B cell (primary cell): ENCODE measurements at regions of chr1 and their contacts with region 1.

Region 1: DNA sequence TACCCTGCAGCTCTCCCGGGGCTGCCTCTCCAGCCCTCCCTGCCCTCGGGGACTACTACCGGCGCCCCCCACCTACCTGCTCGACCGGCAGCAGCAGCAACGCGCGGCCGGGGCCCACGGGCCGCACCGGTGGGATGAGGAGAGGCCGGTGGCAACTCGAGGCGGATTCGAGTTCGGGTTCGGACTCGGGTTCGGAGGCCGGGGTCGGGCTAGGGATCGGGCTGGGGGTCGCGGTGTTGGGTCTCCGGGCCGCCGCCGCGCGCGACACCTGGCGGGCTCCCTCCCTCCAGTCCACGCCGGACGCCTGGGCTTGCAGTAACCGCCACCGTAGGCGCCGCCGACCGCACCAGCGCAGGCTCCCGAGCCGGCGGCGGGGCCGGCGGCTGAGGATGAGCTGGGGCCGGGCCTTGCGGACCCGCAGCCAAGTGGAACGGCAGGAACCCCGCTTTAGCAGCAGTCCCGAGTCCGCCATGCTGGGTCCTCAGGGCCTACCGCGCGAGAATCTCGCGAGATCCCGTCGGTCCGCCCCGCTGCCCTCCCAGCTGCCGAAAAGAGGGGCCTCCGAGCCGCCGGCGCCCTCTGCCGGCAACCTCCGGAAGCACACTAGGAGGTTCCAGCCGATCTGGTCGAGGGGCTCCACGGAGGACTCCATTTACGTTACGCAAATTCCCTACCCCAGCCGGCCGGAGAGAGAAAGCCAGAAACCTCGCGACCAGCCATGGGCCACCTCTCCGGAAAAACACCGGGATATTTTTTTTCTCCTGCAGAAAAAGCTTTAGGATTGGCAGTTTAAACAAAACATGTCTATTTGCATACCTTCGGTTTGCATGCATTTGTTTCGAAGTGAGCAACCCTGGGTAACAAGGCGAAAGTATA is at the start of gene NOL9:
- DNase-seq: peak; percentile 97
- ATAC-seq: peak; percentile 96
- H3K4me3 ChIP-seq: peak within 1 kb of the TSS; percentile 72 to 93 (median 84)
- H3K4me3 Mint-ChIP-seq: peak within 1 kb of the TSS; percentile 87
- H3K27ac ChIP-seq: peak within 1 kb of the TSS; percentile 14 to 86
- H3K27ac Mint-ChIP-seq: peak within 1 kb of the TSS; percentile 86
- H3K4me1 ChIP-seq: peaks cover 17 to 23% of the 10 kb centered on the region in 2 donors
- H3K4me1 Mint-ChIP-seq: peaks cover 20% of the 10 kb centered on the region
- H3K27me3 ChIP-seq: no peaks in the 10 kb centered on the region
- H3K27me3 Mint-ChIP-seq: no peaks in the 10 kb centered on the region
- CTCF ChIP-seq: peak; percentile 94
- total RNA-seq, gene NOL9: 49.5 and 56.7 TPM in 2 replicates

Region 2: GRCh38 chr1:6260961-6261614 is 293.2 kb before region 1 on chr1 and contains the start of gene GPR153:
- CTCF ChIA-PET with region 1: no interaction called
- POLR2A ChIA-PET with region 1: no interaction called
- intact Hi-C with region 1: no loop called
- DNase-seq: peak; percentile 47
- ATAC-seq: peak; percentile 55
- H3K4me3 ChIP-seq: peak within 1 kb of the TSS in 4 of 5 experiments; percentile 31 to 62 (median 58)
- H3K4me3 Mint-ChIP-seq: peak within 1 kb of the TSS; percentile 74
- H3K27ac ChIP-seq: no peak within 1 kb of the TSS
- H3K27ac Mint-ChIP-seq: no peak within 1 kb of the TSS
- H3K4me1 ChIP-seq: peaks cover 9 to 11% of the 10 kb centered on the region in 2 donors
- H3K4me1 Mint-ChIP-seq: peaks cover 13% of the 10 kb centered on the region
- H3K27me3 ChIP-seq: peaks cover 0 to 39% (median 3%) of the 10 kb centered on the region in 4 experiments
- H3K27me3 Mint-ChIP-seq: peaks cover 11% of the 10 kb centered on the region
- CTCF ChIP-seq: no peak
- total RNA-seq, gene GPR153: 0.20 and 0.27 TPM in 2 replicates

Region 3: GRCh38 chr1:6489799-6490180 is 64.5 kb before region 1 on chr1:
- CTCF ChIA-PET with region 1: interaction called, 7 read pairs
- POLR2A ChIA-PET with region 1: no interaction called
- intact Hi-C with region 1: loop called (anchors 1 kb)
- DNase-seq: peak; percentile 83
- ATAC-seq: peak; percentile 71
- H3K4me3 ChIP-seq: peak overlapping the region in 4 of 5 experiments; percentile 44 to 83 (median 68)
- H3K4me3 Mint-ChIP-seq: peak overlapping the region; percentile 70
- H3K27ac ChIP-seq: no peak overlapping the region
- H3K27ac Mint-ChIP-seq: peak overlapping the region; percentile 37
- H3K4me1 ChIP-seq: peaks cover 21 to 34% of the 10 kb centered on the region in 2 donors
- H3K4me1 Mint-ChIP-seq: peaks cover 20% of the 10 kb centered on the region
- H3K27me3 ChIP-seq: peaks cover 0 to 21% (median 8%) of the 10 kb centered on the region in 4 experiments
- H3K27me3 Mint-ChIP-seq: peaks cover 12% of the 10 kb centered on the region
- CTCF ChIP-seq: peak; percentile 96

Region 4: GRCh38 chr1:6523566-6523965 is 30.7 kb before region 1 on chr1:
- CTCF ChIA-PET with region 1: interaction called, 10 read pairs
- POLR2A ChIA-PET with region 1: no interaction called
- intact Hi-C with region 1: no loop called
- DNase-seq: no peak
- ATAC-seq: no peak
- H3K4me3 ChIP-seq: no peak overlapping the region
- H3K4me3 Mint-ChIP-seq: no peak overlapping the region
- H3K27ac ChIP-seq: no peak overlapping the region
- H3K27ac Mint-ChIP-seq: no peak overlapping the region
- H3K4me1 ChIP-seq: no peaks in the 10 kb centered on the region
- H3K4me1 Mint-ChIP-seq: no peaks in the 10 kb centered on the region
- H3K27me3 ChIP-seq: no peaks in the 10 kb centered on the region
- H3K27me3 Mint-ChIP-seq: no peaks in the 10 kb centered on the region
- CTCF ChIP-seq: peak; percentile 18

Region 5: DNA sequence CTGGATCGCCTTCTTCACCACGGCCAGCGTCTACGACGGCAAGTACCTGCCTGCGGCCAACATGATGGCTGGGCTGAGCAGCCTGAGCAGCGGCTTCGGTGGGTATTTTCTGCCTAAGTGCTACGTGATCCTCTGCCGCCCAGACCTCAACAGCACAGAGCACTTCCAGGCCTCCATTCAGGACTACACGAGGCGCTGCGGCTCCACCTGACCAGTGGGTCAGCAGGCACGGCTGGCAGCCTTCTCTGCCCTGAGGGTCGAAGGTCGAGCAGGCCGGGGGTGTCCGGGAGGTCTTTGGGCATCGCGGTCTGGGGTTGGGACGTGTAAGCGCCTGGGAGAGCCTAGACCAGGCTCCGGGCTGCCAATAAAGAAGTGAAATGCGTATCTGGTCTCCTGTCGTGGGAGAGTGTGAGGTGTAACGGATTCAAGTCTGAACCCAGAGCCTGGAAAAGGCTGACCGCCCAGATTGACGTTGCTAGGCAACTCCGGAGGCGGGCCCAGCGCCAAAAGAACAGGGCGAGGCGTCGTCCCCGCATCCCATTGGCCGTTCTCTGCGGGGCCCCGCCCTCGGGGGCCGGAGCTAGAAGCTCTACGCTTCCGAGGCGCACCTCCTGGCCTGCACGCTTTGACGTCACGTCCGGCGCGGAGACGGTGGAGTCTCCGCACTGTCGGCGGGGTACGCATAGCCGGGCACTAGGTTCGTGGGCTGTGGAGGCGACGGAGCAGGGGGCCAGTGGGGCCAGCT is 25.3 kb after region 1 on chr1 and contains the start of gene ZBTB48:
- CTCF ChIA-PET with region 1: interaction called, 9 read pairs
- POLR2A ChIA-PET with region 1: interaction called, 9 read pairs
- intact Hi-C with region 1: loop called (anchors 1 kb)
- DNase-seq: peak; percentile 97
- ATAC-seq: peak; percentile 97
- H3K4me3 ChIP-seq: peak within 1 kb of the TSS; percentile 30 to 91 (median 88)
- H3K4me3 Mint-ChIP-seq: peak within 1 kb of the TSS; percentile 98
- H3K27ac ChIP-seq: peak within 1 kb of the TSS; percentile 87 to 91
- H3K27ac Mint-ChIP-seq: peak within 1 kb of the TSS; percentile 98
- H3K4me1 ChIP-seq: peaks cover 20 to 32% of the 10 kb centered on the region in 2 donors
- H3K4me1 Mint-ChIP-seq: peaks cover 34% of the 10 kb centered on the region
- H3K27me3 ChIP-seq: no peaks in the 10 kb centered on the region
- H3K27me3 Mint-ChIP-seq: no peaks in the 10 kb centered on the region
- CTCF ChIP-seq: no peak
- total RNA-seq, gene ZBTB48: 65.6 and 79.0 TPM in 2 replicates

Region 6: GRCh38 chr1:6624710-6625583 is 70.7 kb after region 1 on chr1 and contains the start of gene THAP3:
- CTCF ChIA-PET with region 1: interaction called, 6 read pairs
- POLR2A ChIA-PET with region 1: no interaction called
- intact Hi-C with region 1: loop called (anchors 1 kb)
- DNase-seq: peak; percentile 92
- ATAC-seq: peak; percentile 98
- H3K4me3 ChIP-seq: peak within 1 kb of the TSS; percentile 61 to 80 (median 62)
- H3K4me3 Mint-ChIP-seq: peak within 1 kb of the TSS; percentile 93
- H3K27ac ChIP-seq: peak within 1 kb of the TSS in 1 of 2 donors; percentile 27
- H3K27ac Mint-ChIP-seq: peak within 1 kb of the TSS; percentile 81
- H3K4me1 ChIP-seq: peaks cover 13 to 32% of the 10 kb centered on the region in 2 donors
- H3K4me1 Mint-ChIP-seq: peaks cover 31% of the 10 kb centered on the region
- H3K27me3 ChIP-seq: no peaks in the 10 kb centered on the region
- H3K27me3 Mint-ChIP-seq: no peaks in the 10 kb centered on the region
- CTCF ChIP-seq: peak; percentile 57
- total RNA-seq, gene THAP3: 24.6 and 30.4 TPM in 2 replicates

Region 7: DNA sequence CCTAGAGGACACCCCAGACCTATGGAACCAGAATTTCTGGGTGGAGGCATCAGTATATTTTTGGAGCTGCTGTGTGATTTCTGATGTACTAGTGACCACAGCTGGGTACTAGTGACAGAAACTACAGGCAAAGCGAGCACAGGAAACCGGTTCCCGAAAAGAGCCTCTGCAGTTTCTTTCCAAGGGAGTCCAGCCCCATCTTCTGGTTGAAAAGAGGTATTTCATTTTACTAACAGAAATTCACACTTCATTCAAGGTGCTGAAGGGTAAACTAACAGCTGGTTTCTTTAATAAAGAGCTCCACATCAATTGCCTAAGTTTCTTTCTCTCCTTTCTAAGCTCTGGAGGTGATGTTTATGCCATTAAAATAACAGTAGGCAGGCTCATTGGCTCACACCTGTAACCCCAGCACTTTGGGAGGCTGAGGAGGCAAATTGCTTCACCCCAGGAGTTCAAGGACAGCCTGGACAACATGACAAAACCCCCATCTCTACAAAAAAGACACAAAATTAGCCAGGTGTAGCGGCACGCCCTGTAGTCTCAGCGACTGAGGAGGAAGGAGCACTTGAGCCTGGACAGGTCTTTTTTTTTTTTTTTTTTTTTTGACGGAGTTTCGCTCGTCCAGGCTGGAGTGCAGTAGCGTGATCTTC is 92.4 kb after region 1 on chr1:
- CTCF ChIA-PET with region 1: interaction called, 17 read pairs
- POLR2A ChIA-PET with region 1: no interaction called
- intact Hi-C with region 1: loop called (anchors 1 kb)
- DNase-seq: peak; percentile 63
- ATAC-seq: peak; percentile 57
- H3K4me3 ChIP-seq: no peak overlapping the region
- H3K4me3 Mint-ChIP-seq: no peak overlapping the region
- H3K27ac ChIP-seq: no peak overlapping the region
- H3K27ac Mint-ChIP-seq: no peak overlapping the region
- H3K4me1 ChIP-seq: no peaks in the 10 kb centered on the region
- H3K4me1 Mint-ChIP-seq: no peaks in the 10 kb centered on the region
- H3K27me3 ChIP-seq: no peaks in the 10 kb centered on the region
- H3K27me3 Mint-ChIP-seq: no peaks in the 10 kb centered on the region
- CTCF ChIP-seq: peak; percentile 76

Region 8: GRCh38 chr1:6727535-6727934 is 173.3 kb after region 1 on chr1:
- CTCF ChIA-PET with region 1: no interaction called
- POLR2A ChIA-PET with region 1: no interaction called
- intact Hi-C with region 1: no loop called
- DNase-seq: peak; percentile 63
- ATAC-seq: peak; percentile 49
- H3K4me3 ChIP-seq: no peak overlapping the region
- H3K4me3 Mint-ChIP-seq: no peak overlapping the region
- H3K27ac ChIP-seq: no peak overlapping the region
- H3K27ac Mint-ChIP-seq: no peak overlapping the region
- H3K4me1 ChIP-seq: no peaks in the 10 kb centered on the region
- H3K4me1 Mint-ChIP-seq: no peaks in the 10 kb centered on the region
- H3K27me3 ChIP-seq: peaks cover 0 to 2% (median 0%) of the 10 kb centered on the region in 4 experiments
- H3K27me3 Mint-ChIP-seq: peaks cover 3% of the 10 kb centered on the region
- CTCF ChIP-seq: peak; percentile 96